ENCODE measurements at regions of chr1 and their contacts with region 1.

Region 1: DNA sequence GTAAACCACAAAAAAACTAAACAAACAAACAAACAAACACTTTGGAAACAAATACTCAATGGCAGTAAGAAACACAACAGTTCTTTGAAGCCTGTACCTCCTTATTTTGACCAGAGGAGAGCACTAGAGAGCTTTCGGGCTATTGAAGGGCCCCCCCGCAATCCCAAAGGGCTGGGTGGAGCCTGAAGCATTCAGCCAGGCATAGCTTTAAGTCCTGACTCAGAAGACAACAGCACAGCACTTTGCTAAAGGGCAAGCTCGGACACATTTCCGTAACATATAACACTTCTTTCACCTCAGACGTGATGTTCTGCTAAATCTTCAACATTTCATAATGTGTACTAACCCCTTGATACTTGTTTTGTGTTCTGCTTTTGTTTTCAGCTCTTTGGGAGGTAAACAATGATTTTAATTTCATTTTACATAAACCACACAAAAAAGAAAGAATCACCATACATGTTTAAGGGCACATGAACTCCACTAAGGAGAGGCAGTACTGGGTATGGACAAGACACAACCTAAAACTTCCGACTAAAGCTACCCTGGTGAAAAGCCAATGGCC is 9.7 kb upstream of the SHCBP1L start:
- DNase-seq: peak; percentile 95
- H3K4me3 Mint-ChIP-seq: peak overlapping the region; percentile 63
- H3K27ac Mint-ChIP-seq: peak overlapping the region; percentile 98
- H3K4me1 Mint-ChIP-seq: peaks cover 13% of the 10 kb centered on the region
- H3K27me3 Mint-ChIP-seq: no peaks in the 10 kb centered on the region
- CTCF ChIP-seq: peak; percentile 98

Region 2: DNA sequence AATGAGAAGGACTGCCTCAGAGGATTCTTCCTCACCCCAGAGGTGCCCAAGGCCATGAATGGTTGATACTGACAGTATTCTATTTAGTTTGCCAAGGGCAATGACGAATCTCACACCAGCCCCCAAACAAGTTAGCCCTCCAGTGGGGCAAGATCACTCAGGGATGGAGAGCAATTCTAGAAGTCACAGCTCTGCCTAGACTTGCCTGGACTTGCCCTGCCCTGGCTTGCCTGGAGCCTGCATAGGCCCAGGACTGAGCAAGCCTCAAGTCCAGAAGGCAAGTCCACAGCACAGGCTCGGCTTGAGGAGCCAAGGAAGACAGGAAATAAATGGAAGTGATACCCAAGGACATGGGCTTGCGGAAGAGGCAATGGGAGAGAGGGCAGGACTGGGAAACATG is 318.9 kb before region 1 on chr1:
- CTCF ChIA-PET with region 1: no interaction called
- POLR2A ChIA-PET with region 1: no interaction called
- intact Hi-C with region 1: no loop called
- DNase-seq: peak; percentile 81
- H3K4me3 Mint-ChIP-seq: no peak overlapping the region
- H3K27ac Mint-ChIP-seq: peak overlapping the region; percentile 95
- H3K4me1 Mint-ChIP-seq: peaks cover 8% of the 10 kb centered on the region
- H3K27me3 Mint-ChIP-seq: no peaks in the 10 kb centered on the region
- CTCF ChIP-seq: no peak

Region 3: GRCh38 chr1:183139281-183139942 is 176.8 kb after region 1 on chr1:
- CTCF ChIA-PET with region 1: interaction called, 7 read pairs
- POLR2A ChIA-PET with region 1: interaction called, 8 read pairs
- intact Hi-C with region 1: loop called (anchors 2 kb)
- DNase-seq: peak; percentile 81
- H3K4me3 Mint-ChIP-seq: peak overlapping the region; percentile 1
- H3K27ac Mint-ChIP-seq: peak overlapping the region; percentile 99
- H3K4me1 Mint-ChIP-seq: peaks cover 27% of the 10 kb centered on the region
- H3K27me3 Mint-ChIP-seq: no peaks in the 10 kb centered on the region
- CTCF ChIP-seq: no peak

Region 4: GRCh38 chr1:183185941-183186490 is 223.4 kb after region 1 on chr1 and contains the start of gene LAMC2:
- CTCF ChIA-PET with region 1: interaction called, 6 read pairs
- POLR2A ChIA-PET with region 1: interaction called, 9 read pairs
- intact Hi-C with region 1: loop called (anchors 1 kb)
- DNase-seq: peak; percentile 98
- H3K4me3 Mint-ChIP-seq: peak within 1 kb of the TSS; percentile 92
- H3K27ac Mint-ChIP-seq: peak within 1 kb of the TSS; percentile 98
- H3K4me1 Mint-ChIP-seq: peaks cover 36% of the 10 kb centered on the region
- H3K27me3 Mint-ChIP-seq: no peaks in the 10 kb centered on the region
- CTCF ChIP-seq: peak; percentile 70
- total RNA-seq, gene LAMC2: 751 and 884 TPM in 2 replicates

Region 5: GRCh38 chr1:183227963-183228649 is 265.5 kb after region 1 on chr1:
- CTCF ChIA-PET with region 1: interaction called, 18 read pairs
- POLR2A ChIA-PET with region 1: interaction called, 10 read pairs
- intact Hi-C with region 1: loop called (anchors 1 kb)
- DNase-seq: peak; percentile 73
- H3K4me3 Mint-ChIP-seq: no peak overlapping the region
- H3K27ac Mint-ChIP-seq: peak overlapping the region; percentile 74
- H3K4me1 Mint-ChIP-seq: peaks cover 23% of the 10 kb centered on the region
- H3K27me3 Mint-ChIP-seq: no peaks in the 10 kb centered on the region
- CTCF ChIP-seq: peak; percentile 80

Region 6: GRCh38 chr1:183318433-183318832 is 355.8 kb after region 1 on chr1:
- CTCF ChIA-PET with region 1: interaction called, 30 read pairs
- POLR2A ChIA-PET with region 1: interaction called, 9 read pairs
- intact Hi-C with region 1: loop called (anchors 1 kb)
- DNase-seq: peak; percentile 95
- H3K4me3 Mint-ChIP-seq: no peak overlapping the region
- H3K27ac Mint-ChIP-seq: peak overlapping the region; percentile 60
- H3K4me1 Mint-ChIP-seq: peaks cover 26% of the 10 kb centered on the region
- H3K27me3 Mint-ChIP-seq: no peaks in the 10 kb centered on the region
- CTCF ChIP-seq: peak; percentile 79

Region 7: GRCh38 chr1:183543619-183544204 is 581.1 kb after region 1 on chr1:
- CTCF ChIA-PET with region 1: no interaction called
- POLR2A ChIA-PET with region 1: no interaction called
- intact Hi-C with region 1: loop called (anchors 2 kb)
- DNase-seq: peak; percentile 77
- H3K4me3 Mint-ChIP-seq: no peak overlapping the region
- H3K27ac Mint-ChIP-seq: no peak overlapping the region
- H3K4me1 Mint-ChIP-seq: peaks cover 7% of the 10 kb centered on the region
- H3K27me3 Mint-ChIP-seq: no peaks in the 10 kb centered on the region
- CTCF ChIP-seq: peak; percentile 77